Right ventricle myocardium inferior (tissue), 1 donor: ENCODE measurements at regions of chr3 and their contacts with region 1.

Region 1: DNA sequence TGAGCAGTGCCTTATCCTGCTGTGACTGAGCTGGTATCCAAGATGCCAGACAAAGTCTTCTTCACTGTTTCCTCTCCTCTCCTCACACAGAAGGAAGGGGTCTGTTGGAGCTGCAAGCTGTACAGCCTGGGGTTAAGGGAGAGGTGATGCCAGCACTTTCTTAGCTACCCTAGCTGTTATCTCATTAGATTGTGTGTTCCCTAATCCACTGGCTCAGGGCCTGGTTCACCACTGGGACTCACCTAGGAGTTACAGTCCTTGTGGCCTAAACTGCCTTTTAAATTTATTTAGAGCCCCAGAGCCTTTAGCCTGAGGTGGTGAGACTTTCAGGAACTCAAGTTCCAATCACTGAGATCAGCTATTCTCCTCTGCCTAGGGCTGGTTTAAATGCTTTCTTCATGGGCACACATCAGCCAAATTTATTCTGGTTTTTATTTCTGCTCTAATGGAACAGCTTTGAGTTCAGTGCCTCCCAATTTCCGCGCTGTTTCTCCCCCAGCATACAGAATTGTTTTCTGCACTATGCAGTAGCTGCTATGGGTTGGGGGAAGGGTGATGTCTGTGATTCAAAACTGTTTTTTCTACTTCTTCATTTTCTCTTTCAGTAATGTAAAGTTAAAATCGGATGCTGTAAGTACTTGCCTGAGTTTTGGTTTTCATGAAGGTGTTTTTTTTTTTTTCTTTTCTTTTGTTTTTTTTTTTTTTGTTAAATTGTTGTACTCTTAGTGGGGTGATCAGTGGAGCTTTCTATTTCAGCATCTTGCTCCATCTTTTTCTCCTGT is 198.8 kb downstream of the DOCK3 start:
- DNase-seq: no peak
- ATAC-seq: peak; percentile 39

Region 2: DNA sequence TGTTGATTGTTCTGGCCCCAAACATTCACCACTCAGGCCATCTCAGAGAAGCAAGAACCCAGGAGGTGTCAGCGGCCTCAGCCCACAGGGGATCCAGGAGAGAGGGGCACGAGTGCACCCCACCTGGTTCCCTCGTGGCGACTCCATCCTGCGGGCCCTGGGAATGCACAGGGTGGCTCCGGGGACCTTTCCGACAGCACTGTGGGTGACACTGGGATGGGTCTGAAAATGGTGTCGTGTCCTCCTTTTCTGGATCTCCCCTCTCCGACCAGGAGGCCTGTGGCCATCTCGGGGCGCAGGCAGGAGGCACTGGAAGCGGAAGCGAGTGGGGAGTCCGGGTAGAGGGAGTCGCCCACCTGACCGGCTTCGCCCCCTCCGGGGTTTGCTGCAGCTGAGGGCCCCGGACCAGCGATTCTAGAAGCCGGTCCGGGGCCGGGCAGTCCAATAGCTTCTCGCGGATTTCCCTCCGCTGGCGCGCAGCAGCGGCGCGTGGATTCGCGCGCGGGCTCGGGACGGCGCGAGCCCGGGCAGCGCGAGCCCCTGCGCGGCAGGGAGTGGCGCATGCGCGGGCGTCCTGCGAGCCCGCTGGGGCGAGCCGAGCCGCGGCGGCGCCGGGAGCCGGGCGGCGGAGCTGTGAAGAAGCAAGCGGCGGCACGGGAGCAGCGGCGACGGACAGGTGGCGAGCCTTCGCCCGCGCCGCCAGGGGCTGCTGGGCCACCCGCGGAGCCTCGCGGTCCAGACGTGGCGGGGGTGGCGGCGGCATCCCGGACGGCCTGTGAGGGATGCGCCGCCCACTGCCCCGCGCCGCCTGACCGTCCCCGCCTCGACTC is 199.0 kb before region 1 on chr3 and contains the start of gene DOCK3:
- intact Hi-C with region 1: loop called (anchors 10 kb)
- DNase-seq: peak; percentile 80
- ATAC-seq: peak; percentile 90
- total RNA-seq, gene DOCK3: 3.9 TPM